ENCODE measurements at regions of chr5 and their contacts with region 1.

Region 1: GRCh38 chr5:167261309-167262100 is 1029.9 kb upstream of the WWC1 start:
- DNase-seq: peak; percentile 2
- H3K4me3 ChIP-seq: no peak overlapping the region
- H3K27ac ChIP-seq: no peak overlapping the region
- H3K4me1 ChIP-seq: no peaks in the 10 kb centered on the region
- H3K27me3 ChIP-seq: peaks cover 6% of the 10 kb centered on the region
- CTCF ChIP-seq: peak; percentile 50 to 51

Region 2: GRCh38 chr5:166898166-166898565 is 363.3 kb before region 1 on chr5:
- CTCF ChIA-PET with region 1: no interaction called
- dilution Hi-C with region 1: no loop called
- in situ Hi-C with region 1: no loop called
- intact Hi-C with region 1: no loop called
- DNase-seq: no peak
- H3K4me3 ChIP-seq: no peak overlapping the region
- H3K27ac ChIP-seq: no peak overlapping the region
- H3K4me1 ChIP-seq: no peaks in the 10 kb centered on the region
- H3K27me3 ChIP-seq: no peaks in the 10 kb centered on the region
- CTCF ChIP-seq: no peak

Region 3: DNA sequence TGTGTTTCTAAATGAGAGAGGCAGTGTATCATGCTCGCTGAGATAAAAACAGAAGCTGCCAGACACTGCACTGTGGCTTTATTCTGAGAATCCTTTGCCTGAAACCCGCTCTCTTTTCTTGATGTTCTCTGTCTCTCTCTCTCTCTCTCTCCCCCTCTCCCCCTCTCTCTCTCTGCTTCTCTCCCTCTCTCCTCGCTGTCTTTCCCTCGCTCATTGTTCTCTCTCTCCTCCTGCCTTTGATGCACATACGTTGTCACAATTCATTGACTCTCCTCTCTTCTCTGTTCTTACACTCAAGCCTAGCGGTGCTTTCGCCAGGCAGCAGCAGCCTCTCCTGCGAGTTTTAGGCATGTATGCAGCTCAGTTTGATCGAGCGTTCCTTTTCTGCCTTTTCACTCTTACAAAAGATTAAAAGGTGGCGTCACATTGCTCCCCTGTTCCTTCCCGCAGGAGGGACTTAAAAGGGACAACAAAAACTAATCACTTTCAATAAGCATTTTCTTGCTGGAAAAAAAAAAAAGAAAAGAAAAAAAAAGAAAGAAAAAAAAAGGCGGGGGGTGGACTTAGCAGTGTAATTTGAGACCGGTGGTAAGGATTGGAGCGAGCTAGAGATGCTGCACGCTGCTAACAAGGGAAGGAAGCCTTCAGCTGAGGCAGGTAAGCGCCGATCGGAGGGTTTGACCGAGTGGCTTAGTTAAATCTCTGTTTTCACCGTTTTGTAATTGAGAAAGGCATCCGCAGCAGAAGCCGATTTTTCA is 312.0 kb after region 1 on chr5:
- CTCF ChIA-PET with region 1: no interaction called
- dilution Hi-C with region 1: no loop called
- in situ Hi-C with region 1: loop called in 1 of 2 experiments (anchors 25 kb)
- intact Hi-C with region 1: no loop called
- DNase-seq: peak; percentile 63
- H3K4me3 ChIP-seq: peak overlapping the region; percentile 38 to 65 (median 56)
- H3K27ac ChIP-seq: peak overlapping the region; percentile 14
- H3K4me1 ChIP-seq: peaks cover 10% of the 10 kb centered on the region
- H3K27me3 ChIP-seq: no peaks in the 10 kb centered on the region
- CTCF ChIP-seq: no peak